ENCODE measurements at regions of chr2 and their contacts with region 1.

Region 1: GRCh38 chr2:108927936-108928659 is 60.9 kb downstream of the EDAR start:
- DNase-seq: no peak
- ATAC-seq: peak; percentile 49

Region 2: GRCh38 chr2:108905176-108905575 is 22.9 kb before region 1 on chr2:
- intact Hi-C with region 1: loop called (anchors 1 kb)
- DNase-seq: no peak
- ATAC-seq: no peak

Region 3: DNA sequence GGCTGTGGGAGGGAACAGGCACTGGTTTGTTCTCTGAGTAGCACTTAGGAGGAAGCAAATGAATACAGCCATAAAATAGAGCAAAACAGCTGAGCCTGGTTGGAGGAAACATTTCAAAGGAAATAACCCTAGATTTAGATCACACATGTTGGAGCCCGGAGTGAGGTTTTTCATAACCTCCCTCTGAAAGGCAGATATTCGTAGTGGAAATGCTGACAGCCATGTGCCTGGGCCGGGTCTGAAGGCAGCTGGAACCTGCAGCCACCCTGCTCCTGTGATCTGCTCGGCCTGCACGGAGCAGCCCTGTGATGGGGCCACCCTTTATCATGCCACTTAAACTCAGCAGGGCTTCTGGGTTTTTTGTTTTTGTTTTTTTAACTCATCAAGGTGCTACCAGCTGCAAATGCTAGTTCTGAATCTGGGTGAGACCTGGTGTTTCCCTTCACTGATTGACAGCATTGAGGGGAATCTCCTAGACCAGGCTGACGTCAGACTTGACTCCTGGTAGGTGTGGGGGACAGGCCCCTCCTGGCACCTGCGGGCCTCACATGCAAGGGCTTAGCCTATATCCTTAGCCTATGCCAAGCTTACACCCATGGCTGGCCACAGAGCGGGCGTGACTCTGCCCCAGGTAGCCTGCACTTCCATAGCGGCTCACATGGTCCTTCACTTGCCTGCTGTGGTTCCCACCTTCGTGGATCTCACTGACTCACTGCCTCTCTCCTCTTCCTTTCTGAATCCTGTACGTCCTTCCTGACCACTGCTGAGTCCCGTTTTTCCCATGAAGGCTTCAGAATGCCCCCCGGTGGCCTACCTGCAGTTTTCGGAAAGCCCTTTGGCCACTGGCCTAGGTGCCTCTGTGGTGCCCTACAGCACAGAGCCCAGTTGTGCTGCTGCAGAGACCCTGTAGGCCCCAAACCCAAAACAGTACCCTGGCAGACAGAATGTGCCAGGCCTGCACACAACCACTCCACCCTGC is 468.4 kb after region 1 on chr2:
- intact Hi-C with region 1: no loop called
- DNase-seq: no peak
- ATAC-seq: peak; percentile 24